Caco-2 (cell line): ENCODE measurements at regions of chr7 and their contacts with region 1.

Region 1: DNA sequence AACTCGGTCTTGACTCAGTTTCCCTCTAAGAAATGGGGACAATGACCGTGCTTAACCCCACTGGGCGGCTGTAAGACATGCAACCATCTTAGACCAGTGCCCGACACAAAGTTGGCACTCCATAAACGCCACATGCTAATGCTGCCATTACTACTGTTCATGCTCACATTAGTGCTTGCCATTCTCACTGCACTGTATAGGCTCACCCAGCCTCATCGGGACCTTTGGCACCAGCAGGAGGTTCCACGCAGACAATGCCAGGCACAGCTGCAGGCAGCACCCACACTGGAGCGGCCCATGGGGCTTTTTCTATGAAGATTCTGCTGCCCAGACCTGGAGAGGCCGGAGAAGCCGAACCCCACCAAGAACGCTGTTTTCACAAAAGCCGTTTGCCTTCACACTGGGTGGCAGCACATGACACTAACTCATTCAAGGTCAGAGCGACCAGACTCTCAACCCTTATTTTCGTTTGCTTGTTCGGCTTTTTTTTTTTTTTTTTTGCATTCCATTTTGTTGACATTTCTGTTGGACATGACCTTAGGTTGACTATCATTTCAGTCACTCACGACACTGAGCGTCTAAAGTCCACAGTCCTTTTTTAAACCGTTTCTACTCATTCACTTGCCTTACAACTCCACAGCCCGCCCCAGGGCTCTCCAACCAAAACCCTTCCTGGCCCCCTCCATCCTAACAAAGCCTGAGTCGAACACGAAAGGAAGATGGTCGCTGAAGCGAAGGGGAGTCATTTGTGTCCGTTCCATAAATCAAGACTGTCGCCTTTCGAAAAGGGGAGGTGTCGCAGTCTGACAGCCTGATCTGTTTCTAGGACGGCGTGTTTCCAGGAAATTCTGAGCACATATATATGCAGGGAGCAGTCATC is 124.4 kb upstream of the RNF32 start:
- DNase-seq: peak; percentile 55 to 70
- H3K4me3 ChIP-seq: peak overlapping the region; percentile 24
- H3K4me3 Mint-ChIP-seq: peak overlapping the region; percentile 71
- H3K27ac Mint-ChIP-seq: peak overlapping the region; percentile 55
- H3K4me1 ChIP-seq: peaks cover 10% of the 10 kb centered on the region
- H3K4me1 Mint-ChIP-seq: peaks cover 22% of the 10 kb centered on the region
- H3K27me3 ChIP-seq: no peaks in the 10 kb centered on the region
- H3K27me3 Mint-ChIP-seq: no peaks in the 10 kb centered on the region
- CTCF ChIP-seq: peak in 1 of 2 experiments; percentile 44

Region 2: DNA sequence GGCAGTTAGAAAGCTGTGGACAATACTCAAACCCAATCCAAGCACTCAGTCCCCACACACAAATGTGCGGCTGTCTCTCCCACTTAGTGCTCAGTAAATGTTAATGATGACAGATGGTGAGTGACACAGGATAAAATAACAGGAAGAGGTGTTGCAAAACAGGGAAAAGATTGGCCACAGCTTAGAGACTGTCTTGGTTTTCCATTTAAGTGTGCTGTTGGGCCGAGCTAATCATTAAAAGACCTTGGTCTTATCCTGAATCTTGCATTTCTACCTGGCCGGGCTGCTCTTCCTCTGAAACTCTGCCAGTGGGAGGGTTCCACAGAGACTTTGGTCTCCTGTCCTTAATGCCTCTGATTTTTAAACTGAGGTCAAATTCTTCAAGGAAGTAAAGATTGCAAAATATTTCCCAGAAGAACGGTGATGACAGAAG is 11.3 kb after region 1 on chr7:
- CTCF ChIA-PET with region 1: no interaction called
- POLR2A ChIA-PET with region 1: no interaction called
- intact Hi-C with region 1: loop called (anchors 1 kb)
- DNase-seq: peak; percentile 68 to 82
- H3K4me3 ChIP-seq: no peak overlapping the region
- H3K4me3 Mint-ChIP-seq: no peak overlapping the region
- H3K27ac Mint-ChIP-seq: peak overlapping the region; percentile 45
- H3K4me1 ChIP-seq: peaks cover 39% of the 10 kb centered on the region
- H3K4me1 Mint-ChIP-seq: peaks cover 18% of the 10 kb centered on the region
- H3K27me3 ChIP-seq: no peaks in the 10 kb centered on the region
- H3K27me3 Mint-ChIP-seq: no peaks in the 10 kb centered on the region
- CTCF ChIP-seq: no peak